Panc1 (cell line): ENCODE measurements at regions of chr4 and their contacts with region 1.

Region 1: GRCh38 chr4:56435306-56435926 is at the start of gene PPAT:
- DNase-seq: peak; percentile 76
- ATAC-seq: peak; percentile 90
- H3K4me3 ChIP-seq: peak within 1 kb of the TSS; percentile 84 to 88
- H3K27ac ChIP-seq: peak within 1 kb of the TSS; percentile 89
- H3K4me1 ChIP-seq: no peaks in the 10 kb centered on the region; the same call in 1 of the 2 replicates
- H3K27me3 ChIP-seq: no peaks in the 10 kb centered on the region
- CTCF ChIP-seq: no peak
- total RNA-seq, gene PPAT: 38.3 TPM

Region 2: GRCh38 chr4:54581807-54582206 is 1853.6 kb before region 1 on chr4:
- CTCF ChIA-PET with region 1: no interaction called
- POLR2A ChIA-PET with region 1: no interaction called
- in situ Hi-C with region 1: no loop called
- intact Hi-C with region 1: no loop called
- DNase-seq: no peak
- ATAC-seq: no peak
- H3K4me3 ChIP-seq: no peak overlapping the region
- H3K27ac ChIP-seq: no peak overlapping the region
- H3K4me1 ChIP-seq: no peaks in the 10 kb centered on the region; the same call in none of the 2 replicates
- H3K27me3 ChIP-seq: no peaks in the 10 kb centered on the region
- CTCF ChIP-seq: no peak

Region 3: DNA sequence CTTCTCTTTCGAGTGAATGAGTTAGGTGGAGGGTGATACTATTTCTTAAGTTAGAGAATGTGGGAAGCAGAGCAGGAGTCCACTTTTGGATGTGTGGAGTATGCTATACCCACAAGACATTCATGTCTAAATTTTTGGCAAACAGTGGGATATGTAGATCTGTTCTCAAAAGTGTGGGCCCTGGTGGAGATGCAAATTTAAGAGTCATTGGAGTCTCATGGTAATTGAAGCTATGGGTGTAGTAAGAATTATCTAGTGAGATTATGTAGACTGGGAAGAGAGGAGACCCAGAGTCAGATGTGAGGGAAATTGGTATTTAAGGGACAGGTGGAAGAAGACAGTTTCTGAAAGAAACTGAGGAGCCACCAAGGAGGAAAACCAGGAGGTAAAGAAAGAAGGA is 479.7 kb before region 1 on chr4:
- CTCF ChIA-PET with region 1: no interaction called
- POLR2A ChIA-PET with region 1: no interaction called
- in situ Hi-C with region 1: no loop called
- intact Hi-C with region 1: loop called (anchors 10 kb)
- DNase-seq: no peak
- ATAC-seq: no peak
- H3K4me3 ChIP-seq: no peak overlapping the region
- H3K27ac ChIP-seq: no peak overlapping the region
- H3K4me1 ChIP-seq: no peaks in the 10 kb centered on the region
- H3K27me3 ChIP-seq: no peaks in the 10 kb centered on the region
- CTCF ChIP-seq: no peak

Region 4: DNA sequence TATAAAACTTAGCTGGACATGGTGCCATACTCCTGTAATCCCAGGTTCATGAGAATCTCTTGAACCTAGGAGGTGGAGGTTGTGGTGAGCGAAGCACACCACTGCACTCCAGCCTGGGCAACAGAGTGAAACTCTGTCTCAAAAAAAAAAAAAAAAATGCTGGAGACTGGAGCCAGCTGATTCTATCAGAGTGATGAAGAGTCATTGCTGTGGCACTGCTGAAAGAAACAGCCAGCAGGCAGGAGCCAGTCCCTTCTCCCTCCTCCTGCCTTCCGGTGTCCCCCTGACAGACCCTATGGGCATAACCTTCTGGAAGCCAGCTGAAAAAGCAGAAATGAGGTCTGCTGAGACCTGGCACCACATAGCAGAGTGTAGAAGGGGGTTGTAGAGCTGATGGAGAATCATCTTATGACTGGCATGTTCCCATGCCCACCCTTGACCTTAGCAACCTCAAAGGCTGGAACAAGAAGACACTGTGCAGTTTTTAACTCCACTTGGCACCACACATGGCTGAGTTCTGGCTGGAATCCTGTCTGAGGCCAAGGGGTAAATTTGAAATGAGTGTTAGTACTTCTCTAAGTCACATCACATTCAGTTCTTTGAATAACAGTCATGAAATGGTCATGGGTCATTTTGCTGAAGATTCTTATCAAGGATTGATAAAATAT is 388.7 kb after region 1 on chr4:
- CTCF ChIA-PET with region 1: interaction called, 16 read pairs
- POLR2A ChIA-PET with region 1: no interaction called
- in situ Hi-C with region 1: no loop called
- intact Hi-C with region 1: no loop called
- DNase-seq: no peak
- ATAC-seq: no peak
- H3K4me3 ChIP-seq: no peak overlapping the region
- H3K27ac ChIP-seq: no peak overlapping the region
- H3K4me1 ChIP-seq: no peaks in the 10 kb centered on the region
- H3K27me3 ChIP-seq: no peaks in the 10 kb centered on the region
- CTCF ChIP-seq: no peak